WTC11 (cell line): ENCODE measurements at regions of chr19 and their contacts with region 1.

Region 1: GRCh38 chr19:20565321-20566018 is at the start of gene ZNF737:
- DNase-seq: peak; percentile 95
- ATAC-seq: peak; percentile 98
- H3K4me3 Mint-ChIP-seq: peak within 1 kb of the TSS; percentile 99
- H3K27ac Mint-ChIP-seq: peak within 1 kb of the TSS; percentile 98
- H3K4me1 Mint-ChIP-seq: 0 out of 2 replicates have a peak, but pooled peaks cover 3% of the 10 kb centered on the region
- H3K27me3 Mint-ChIP-seq: no peaks in the 10 kb centered on the region
- CTCF ChIP-seq: no peak
- total RNA-seq, gene ZNF737: 15.6 to 20.2 TPM (median 16.2 TPM) in 3 replicates

Region 2: GRCh38 chr19:20339444-20339843 is 226.0 kb before region 1 on chr19:
- CTCF ChIA-PET with region 1: no interaction called
- POLR2A ChIA-PET with region 1: no interaction called
- DNase-seq: no peak
- ATAC-seq: no peak
- H3K4me3 Mint-ChIP-seq: no peak overlapping the region
- H3K27ac Mint-ChIP-seq: no peak overlapping the region
- H3K4me1 Mint-ChIP-seq: no peaks in the 10 kb centered on the region
- H3K27me3 Mint-ChIP-seq: no peaks in the 10 kb centered on the region
- CTCF ChIP-seq: no peak

Region 3: DNA sequence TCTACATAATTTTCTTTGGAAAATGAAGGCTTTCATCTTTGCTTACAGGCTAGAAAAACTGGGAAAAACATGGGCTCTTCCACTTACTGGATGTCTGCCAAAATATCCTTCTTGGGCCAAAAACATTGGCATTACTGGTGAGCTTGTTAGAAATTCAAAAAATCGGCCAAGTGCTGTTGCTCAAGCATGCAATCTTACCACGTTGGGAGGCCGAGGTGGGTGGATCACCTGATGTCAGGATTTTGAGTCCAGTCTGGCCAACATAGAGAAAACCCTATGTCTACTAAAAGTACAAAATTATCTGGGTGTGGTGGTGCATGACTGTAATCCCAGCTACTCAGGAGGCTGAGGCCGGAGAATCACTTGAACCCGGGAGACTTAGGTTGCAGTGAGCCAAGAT is 176.6 kb before region 1 on chr19:
- CTCF ChIA-PET with region 1: no interaction called
- POLR2A ChIA-PET with region 1: no interaction called
- DNase-seq: no peak
- ATAC-seq: no peak
- H3K4me3 Mint-ChIP-seq: no peak overlapping the region
- H3K27ac Mint-ChIP-seq: no peak overlapping the region
- H3K4me1 Mint-ChIP-seq: no peaks in the 10 kb centered on the region
- H3K27me3 Mint-ChIP-seq: no peaks in the 10 kb centered on the region; the same call in 1 of the 2 replicates
- CTCF ChIP-seq: no peak

Region 4: GRCh38 chr19:20423381-20424197 is 141.9 kb before region 1 on chr19:
- CTCF ChIA-PET with region 1: interaction called, 3 read pairs
- POLR2A ChIA-PET with region 1: interaction called, 17 read pairs
- DNase-seq: peak; percentile 34
- ATAC-seq: no peak
- H3K4me3 Mint-ChIP-seq: peak overlapping the region; percentile 100
- H3K27ac Mint-ChIP-seq: peak overlapping the region; percentile 100
- H3K4me1 Mint-ChIP-seq: peaks cover 31% of the 10 kb centered on the region
- H3K27me3 Mint-ChIP-seq: no peaks in the 10 kb centered on the region; the same call in 1 of the 2 replicates
- CTCF ChIP-seq: no peak

Region 5: GRCh38 chr19:20453425-20453935 is 112.0 kb before region 1 on chr19:
- CTCF ChIA-PET with region 1: no interaction called
- POLR2A ChIA-PET with region 1: no interaction called
- DNase-seq: no peak
- ATAC-seq: no peak
- H3K4me3 Mint-ChIP-seq: no peak overlapping the region
- H3K27ac Mint-ChIP-seq: no peak overlapping the region
- H3K4me1 Mint-ChIP-seq: peaks cover 7% of the 10 kb centered on the region
- H3K27me3 Mint-ChIP-seq: no peaks in the 10 kb centered on the region
- CTCF ChIP-seq: no peak

Region 6: GRCh38 chr19:20607943-20608342 is 42.5 kb after region 1 on chr19:
- CTCF ChIA-PET with region 1: no interaction called
- POLR2A ChIA-PET with region 1: no interaction called
- DNase-seq: no peak
- ATAC-seq: no peak
- H3K4me3 Mint-ChIP-seq: no peak overlapping the region
- H3K27ac Mint-ChIP-seq: no peak overlapping the region
- H3K4me1 Mint-ChIP-seq: no peaks in the 10 kb centered on the region
- H3K27me3 Mint-ChIP-seq: no peaks in the 10 kb centered on the region
- CTCF ChIP-seq: no peak

Region 7: GRCh38 chr19:20661150-20661819 is 95.8 kb after region 1 on chr19 and contains the start of gene ZNF626:
- CTCF ChIA-PET with region 1: no interaction called
- POLR2A ChIA-PET with region 1: interaction called, 17 read pairs
- DNase-seq: peak; percentile 97
- ATAC-seq: peak; percentile 93
- H3K4me3 Mint-ChIP-seq: peak within 1 kb of the TSS; percentile 96
- H3K27ac Mint-ChIP-seq: peak within 1 kb of the TSS; percentile 97
- H3K4me1 Mint-ChIP-seq: peaks cover 38% of the 10 kb centered on the region
- H3K27me3 Mint-ChIP-seq: peaks cover 3% of the 10 kb centered on the region; the same call in 1 of the 2 replicates
- CTCF ChIP-seq: no peak
- total RNA-seq, gene ZNF626: 15.5 to 24.4 TPM (median 17.6 TPM) in 3 replicates